ENCODE measurements at regions of chr6 and their contacts with region 1.

Region 1: DNA sequence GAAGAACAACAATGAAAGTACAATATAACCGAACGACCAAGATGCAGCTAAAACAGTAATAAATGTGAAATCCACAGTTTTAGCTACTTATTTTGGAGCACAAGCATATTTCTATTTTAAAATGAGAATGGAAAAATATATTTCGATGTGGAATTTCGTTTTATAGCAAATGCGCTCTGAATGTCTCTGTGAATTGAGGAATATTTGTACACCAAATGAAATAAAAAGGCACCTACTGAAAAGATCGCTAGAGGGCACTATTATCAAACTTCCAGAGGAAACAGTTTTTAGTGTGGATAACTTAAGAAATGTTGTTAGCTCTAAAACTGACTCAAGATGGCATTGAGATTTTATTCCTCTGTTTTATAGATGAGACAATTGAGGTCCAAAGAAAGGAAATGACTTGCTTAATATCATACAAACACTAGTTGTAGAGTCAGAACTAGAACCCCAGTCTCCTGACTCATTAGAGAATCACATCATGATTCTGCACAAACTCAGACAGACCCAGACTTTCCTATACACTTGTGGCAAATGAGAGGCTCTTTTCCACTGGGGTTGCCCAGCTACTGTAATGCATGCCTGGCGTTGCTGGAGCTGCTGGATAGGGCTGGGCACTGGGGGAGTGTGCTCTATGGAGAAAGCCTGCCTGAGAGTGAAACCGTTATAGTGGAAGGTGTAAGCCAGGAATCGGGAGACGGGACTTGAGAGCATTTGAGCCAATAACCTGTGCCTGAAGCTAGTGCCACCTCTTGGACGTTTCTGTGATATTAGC is 51.9 kb downstream of the GCLC start:
- DNase-seq: peak; percentile 64
- ATAC-seq: peak; percentile 41
- H3K4me3 ChIP-seq: no peak overlapping the region
- H3K4me3 Mint-ChIP-seq: no peak overlapping the region
- H3K27ac ChIP-seq: no peak overlapping the region
- H3K27ac Mint-ChIP-seq: no peak overlapping the region
- H3K4me1 ChIP-seq: peaks cover 0 to 2% of the 10 kb centered on the region in 2 donors
- H3K4me1 Mint-ChIP-seq: no peaks in the 10 kb centered on the region
- H3K27me3 ChIP-seq: no peaks in the 10 kb centered on the region
- H3K27me3 Mint-ChIP-seq: no peaks in the 10 kb centered on the region
- CTCF ChIP-seq: peak; percentile 89

Region 2: DNA sequence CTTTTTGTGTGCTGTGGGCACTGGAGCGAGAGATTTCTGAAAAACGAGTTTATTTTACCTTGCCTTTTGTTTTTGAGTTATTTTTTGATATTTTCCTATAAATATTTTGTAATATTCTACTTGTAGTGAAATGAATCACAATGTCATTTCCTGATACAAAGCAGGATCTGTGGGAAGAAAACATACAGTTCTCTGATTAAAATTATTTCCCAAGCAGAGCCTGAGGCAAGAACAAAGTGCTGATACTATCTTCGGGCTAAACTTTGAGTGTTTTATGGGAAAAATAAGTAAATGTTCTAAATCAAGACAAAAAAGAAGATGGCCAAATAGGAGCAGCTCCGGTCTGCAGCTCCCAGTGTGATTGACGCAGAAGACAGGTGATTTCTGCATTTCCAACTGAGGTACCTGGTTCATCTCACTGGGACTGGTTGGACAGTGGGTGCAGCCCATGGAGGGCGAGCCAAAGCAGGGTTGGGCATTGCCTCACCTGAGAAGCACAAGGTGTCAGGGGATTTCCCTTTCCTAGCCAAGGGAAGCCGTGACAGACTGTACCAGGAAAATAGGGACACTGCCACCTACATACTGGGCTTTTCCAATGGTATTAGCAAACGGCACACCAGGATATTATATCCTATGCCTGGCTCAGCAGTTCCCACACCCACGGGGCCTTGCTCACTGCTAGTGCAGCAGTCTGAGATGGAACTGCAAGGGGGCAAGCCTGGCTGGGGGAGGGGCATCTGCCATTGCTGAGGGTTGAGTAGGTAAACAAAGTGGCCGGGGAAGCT is 110.4 kb before region 1 on chr6:
- CTCF ChIA-PET with region 1: no interaction called
- POLR2A ChIA-PET with region 1: no interaction called
- intact Hi-C with region 1: no loop called
- DNase-seq: no peak
- ATAC-seq: no peak
- H3K4me3 ChIP-seq: no peak overlapping the region
- H3K4me3 Mint-ChIP-seq: no peak overlapping the region
- H3K27ac ChIP-seq: no peak overlapping the region
- H3K27ac Mint-ChIP-seq: no peak overlapping the region
- H3K4me1 ChIP-seq: no peaks in the 10 kb centered on the region
- H3K4me1 Mint-ChIP-seq: no peaks in the 10 kb centered on the region
- H3K27me3 ChIP-seq: peaks cover 0 to 3% (median 1%) of the 10 kb centered on the region in 4 experiments
- H3K27me3 Mint-ChIP-seq: no peaks in the 10 kb centered on the region
- CTCF ChIP-seq: no peak

Region 3: DNA sequence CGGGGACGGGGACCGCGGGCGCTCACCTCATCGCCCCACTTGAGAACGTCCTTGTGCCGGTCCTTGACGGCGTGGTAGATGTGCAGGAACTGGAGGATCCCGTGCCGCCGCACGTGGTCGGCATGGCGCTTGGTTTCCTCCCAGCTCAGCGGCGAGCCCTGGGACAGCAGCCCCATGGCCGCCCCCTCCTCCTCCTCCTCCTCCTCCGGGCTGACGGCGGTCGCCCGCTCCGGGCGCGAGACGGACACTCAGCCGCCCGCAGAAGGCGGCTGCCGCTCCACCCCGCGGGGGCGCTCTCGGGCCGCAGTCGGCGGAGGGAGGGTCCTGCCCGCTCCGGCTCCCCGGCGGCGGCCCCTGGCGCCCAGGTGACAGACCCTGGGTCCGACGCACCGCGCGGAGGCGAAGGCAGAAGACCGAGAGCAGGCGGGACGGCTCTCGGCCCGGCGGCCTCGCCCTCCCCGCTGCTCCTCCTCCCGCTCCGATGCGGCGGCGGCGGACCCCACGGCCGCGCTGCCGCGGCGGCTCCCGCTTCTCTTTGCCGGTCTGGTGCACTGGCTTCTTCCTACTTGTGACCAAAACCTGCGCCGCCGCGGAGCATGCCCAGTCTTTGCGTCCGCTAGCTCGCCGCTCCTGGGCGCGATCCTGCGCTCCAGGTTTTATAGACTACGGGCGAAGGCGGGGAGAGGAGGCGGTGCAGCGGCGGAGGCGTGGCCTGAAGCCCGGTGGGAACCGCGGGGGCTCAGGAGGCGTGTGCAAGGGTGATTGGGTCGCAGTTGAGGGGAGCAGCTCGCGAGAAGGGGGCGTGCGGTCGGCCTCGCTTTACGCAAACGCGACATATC is 51.6 kb after region 1 on chr6 and contains the start of gene GCLC:
- CTCF ChIA-PET with region 1: interaction called, 10 read pairs
- POLR2A ChIA-PET with region 1: no interaction called
- intact Hi-C with region 1: loop called (anchors 1 kb)
- DNase-seq: peak; percentile 95
- ATAC-seq: peak; percentile 67
- H3K4me3 ChIP-seq: peak within 1 kb of the TSS; percentile 45 to 81 (median 69)
- H3K4me3 Mint-ChIP-seq: peak within 1 kb of the TSS; percentile 97
- H3K27ac ChIP-seq: peak within 1 kb of the TSS in 1 of 2 donors; percentile 68
- H3K27ac Mint-ChIP-seq: peak within 1 kb of the TSS; percentile 93
- H3K4me1 ChIP-seq: peaks cover 22 to 32% of the 10 kb centered on the region in 2 donors
- H3K4me1 Mint-ChIP-seq: peaks cover 52% of the 10 kb centered on the region
- H3K27me3 ChIP-seq: no peaks in the 10 kb centered on the region
- H3K27me3 Mint-ChIP-seq: no peaks in the 10 kb centered on the region
- CTCF ChIP-seq: peak; percentile 81
- total RNA-seq, gene GCLC: 25.8 and 37.8 TPM in 2 replicates

Region 4: DNA sequence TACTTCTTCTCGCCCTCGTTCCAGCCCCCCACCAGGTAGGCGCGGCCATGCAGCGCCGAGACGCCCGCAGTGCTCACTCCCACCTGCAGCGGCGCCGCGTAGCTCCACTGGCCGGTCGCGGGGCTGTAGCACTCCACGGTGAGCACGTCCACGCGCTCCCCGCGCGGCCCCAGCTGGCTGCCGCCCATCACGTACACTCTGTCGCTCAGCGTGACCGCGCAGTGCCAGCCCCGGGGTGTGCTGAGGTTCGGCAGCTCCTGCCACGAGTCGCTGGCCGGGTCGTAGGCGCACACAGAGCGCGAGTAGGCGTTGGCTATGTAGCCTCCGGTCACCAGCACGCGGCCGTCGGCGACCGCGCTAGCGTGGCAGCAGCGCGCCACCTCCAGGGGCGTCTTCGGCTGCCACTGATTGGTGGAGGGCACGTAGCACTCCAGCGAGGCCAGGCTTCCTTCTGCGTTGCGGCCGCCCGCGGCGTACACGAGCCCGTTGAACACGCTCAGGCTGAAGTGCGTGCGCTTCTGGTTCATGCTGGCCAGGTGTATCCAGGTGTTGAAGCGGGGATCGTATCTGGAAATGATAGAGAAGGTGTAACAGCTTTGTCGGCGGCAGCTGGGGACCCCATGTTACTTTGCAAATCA is 158.8 kb after region 1 on chr6:
- CTCF ChIA-PET with region 1: interaction called, 130 read pairs
- POLR2A ChIA-PET with region 1: no interaction called
- intact Hi-C with region 1: loop called (anchors 1 kb)
- DNase-seq: peak; percentile 87
- ATAC-seq: peak; percentile 83
- H3K4me3 ChIP-seq: peak overlapping the region; percentile 64 to 96 (median 79)
- H3K4me3 Mint-ChIP-seq: peak overlapping the region; percentile 96
- H3K27ac ChIP-seq: peak overlapping the region; percentile 9 to 51
- H3K27ac Mint-ChIP-seq: peak overlapping the region; percentile 90
- H3K4me1 ChIP-seq: peaks cover 20 to 26% of the 10 kb centered on the region in 2 donors
- H3K4me1 Mint-ChIP-seq: peaks cover 20% of the 10 kb centered on the region
- H3K27me3 ChIP-seq: peaks cover 0 to 6% (median 0%) of the 10 kb centered on the region in 4 experiments
- H3K27me3 Mint-ChIP-seq: no peaks in the 10 kb centered on the region
- CTCF ChIP-seq: peak; percentile 24

Region 5: GRCh38 chr6:53679446-53679933 is 186.4 kb after region 1 on chr6:
- CTCF ChIA-PET with region 1: interaction called, 12 read pairs
- POLR2A ChIA-PET with region 1: no interaction called
- intact Hi-C with region 1: no loop called
- DNase-seq: peak; percentile 40
- ATAC-seq: peak; percentile 36
- H3K4me3 ChIP-seq: no peak overlapping the region
- H3K4me3 Mint-ChIP-seq: no peak overlapping the region
- H3K27ac ChIP-seq: no peak overlapping the region
- H3K27ac Mint-ChIP-seq: no peak overlapping the region
- H3K4me1 ChIP-seq: no peaks in the 10 kb centered on the region
- H3K4me1 Mint-ChIP-seq: no peaks in the 10 kb centered on the region
- H3K27me3 ChIP-seq: no peaks in the 10 kb centered on the region
- H3K27me3 Mint-ChIP-seq: peaks cover 14% of the 10 kb centered on the region
- CTCF ChIP-seq: peak; percentile 31

Region 6: DNA sequence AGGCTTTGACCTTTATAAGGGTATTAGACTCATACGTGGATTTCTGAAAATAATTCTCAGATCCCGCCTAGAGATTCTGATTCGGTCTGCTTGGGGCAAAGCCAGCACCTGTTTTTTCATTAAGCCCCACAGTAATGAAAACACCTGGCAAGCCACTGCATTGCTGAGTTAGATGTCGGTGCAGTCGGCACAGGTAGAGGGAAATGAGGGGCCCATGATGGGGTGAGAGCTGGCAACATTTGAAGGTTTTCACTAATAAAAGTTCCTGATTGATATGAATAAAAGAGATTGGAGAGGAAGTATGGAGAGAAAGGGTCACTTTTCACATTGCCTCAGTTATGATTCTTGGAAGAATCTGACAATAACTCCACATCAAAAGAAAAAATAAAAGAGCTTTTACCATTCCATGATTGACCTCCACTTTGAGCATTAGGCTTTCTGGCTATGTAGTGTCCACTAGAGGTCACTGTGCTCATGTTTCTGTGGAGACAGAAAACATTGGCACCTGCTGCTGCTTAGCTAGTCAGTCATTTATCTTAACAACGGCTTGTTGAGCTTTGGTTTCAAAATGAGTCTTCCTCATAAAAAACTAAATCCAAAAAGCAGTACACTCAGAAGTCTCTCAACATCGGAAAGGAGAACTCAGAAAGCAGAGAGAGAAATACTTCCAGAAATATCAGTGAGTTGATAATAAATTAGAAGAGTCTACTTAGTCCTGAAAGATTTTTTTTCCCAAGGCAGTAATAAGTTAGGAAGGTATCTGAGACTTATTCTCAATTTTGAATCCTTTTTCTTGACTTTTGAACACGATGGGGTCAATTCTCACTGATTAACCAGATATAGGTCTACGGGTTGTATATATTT is 225.8 kb after region 1 on chr6:
- CTCF ChIA-PET with region 1: interaction called, 270 read pairs
- POLR2A ChIA-PET with region 1: no interaction called
- intact Hi-C with region 1: no loop called
- DNase-seq: peak; percentile 71
- ATAC-seq: peak; percentile 75
- H3K4me3 ChIP-seq: no peak overlapping the region
- H3K4me3 Mint-ChIP-seq: no peak overlapping the region
- H3K27ac ChIP-seq: no peak overlapping the region
- H3K27ac Mint-ChIP-seq: no peak overlapping the region
- H3K4me1 ChIP-seq: no peaks in the 10 kb centered on the region
- H3K4me1 Mint-ChIP-seq: peaks cover 2% of the 10 kb centered on the region
- H3K27me3 ChIP-seq: peaks cover 0 to 9% (median 0%) of the 10 kb centered on the region in 4 experiments
- H3K27me3 Mint-ChIP-seq: peaks cover 29% of the 10 kb centered on the region
- CTCF ChIP-seq: peak; percentile 82

Region 7: GRCh38 chr6:53879608-53880007 is 386.6 kb after region 1 on chr6:
- CTCF ChIA-PET with region 1: no interaction called
- POLR2A ChIA-PET with region 1: no interaction called
- intact Hi-C with region 1: no loop called
- DNase-seq: no peak
- ATAC-seq: no peak
- H3K4me3 ChIP-seq: no peak overlapping the region
- H3K4me3 Mint-ChIP-seq: no peak overlapping the region
- H3K27ac ChIP-seq: no peak overlapping the region
- H3K27ac Mint-ChIP-seq: no peak overlapping the region
- H3K4me1 ChIP-seq: no peaks in the 10 kb centered on the region
- H3K4me1 Mint-ChIP-seq: no peaks in the 10 kb centered on the region
- H3K27me3 ChIP-seq: no peaks in the 10 kb centered on the region
- H3K27me3 Mint-ChIP-seq: no peaks in the 10 kb centered on the region
- CTCF ChIP-seq: no peak

Region 8: GRCh38 chr6:53916804-53917463 is 423.9 kb after region 1 on chr6:
- CTCF ChIA-PET with region 1: no interaction called
- POLR2A ChIA-PET with region 1: no interaction called
- intact Hi-C with region 1: no loop called
- DNase-seq: no peak
- ATAC-seq: no peak
- H3K4me3 ChIP-seq: no peak overlapping the region
- H3K4me3 Mint-ChIP-seq: no peak overlapping the region
- H3K27ac ChIP-seq: no peak overlapping the region
- H3K27ac Mint-ChIP-seq: no peak overlapping the region
- H3K4me1 ChIP-seq: no peaks in the 10 kb centered on the region
- H3K4me1 Mint-ChIP-seq: no peaks in the 10 kb centered on the region
- H3K27me3 ChIP-seq: no peaks in the 10 kb centered on the region
- H3K27me3 Mint-ChIP-seq: no peaks in the 10 kb centered on the region
- CTCF ChIP-seq: no peak

Measured in B cell (primary cell).